Naive thymus-derived CD4-positive, alpha-beta T cell (primary cell): ENCODE measurements at regions of chr18 and their contacts with region 1.

Region 1: DNA sequence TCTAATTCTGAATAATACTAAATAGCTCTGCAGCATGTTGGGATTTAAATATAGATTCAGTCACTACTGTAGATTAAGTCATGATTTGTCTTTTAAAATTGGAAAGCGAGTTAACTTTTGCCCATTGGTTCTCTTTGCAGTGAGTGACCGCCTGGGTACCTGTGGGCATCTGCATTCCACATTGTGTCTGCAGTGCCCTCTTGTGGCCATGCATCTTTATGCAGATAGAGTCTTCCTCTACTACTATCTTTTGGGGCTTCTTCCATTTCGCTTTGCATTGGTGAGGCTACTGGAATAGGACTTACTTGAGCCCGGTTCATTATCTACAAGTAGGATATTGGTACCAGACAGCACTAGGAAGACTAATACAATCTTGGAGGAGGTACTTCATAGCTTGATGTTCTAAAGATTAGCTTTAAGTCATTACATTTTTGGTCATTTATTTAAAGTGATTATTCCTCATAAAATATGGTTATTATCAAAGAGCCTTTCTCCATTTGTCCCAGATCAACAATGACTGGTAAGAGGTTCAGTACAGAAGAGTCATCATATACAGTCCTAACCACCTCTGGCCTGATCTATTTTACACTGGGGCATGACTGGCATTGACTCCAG is 203.0 kb downstream of the SOCS6 start:
- DNase-seq: peak in 7 of 9 donors; percentile 9 to 43 (median 25)
- ATAC-seq: peak; percentile 68
- H3K4me3 ChIP-seq: no peak overlapping the region
- H3K4me3 Mint-ChIP-seq: no peak overlapping the region
- H3K27ac ChIP-seq: no peak overlapping the region
- H3K27ac Mint-ChIP-seq: peak overlapping the region in 4 of 9 donors; percentile 31 to 59 (median 44)
- H3K4me1 ChIP-seq: no peaks in the 10 kb centered on the region
- H3K4me1 Mint-ChIP-seq: peaks cover 0 to 14% (median 8%) of the 10 kb centered on the region in 7 donors
- H3K27me3 ChIP-seq: no peaks in the 10 kb centered on the region
- H3K27me3 Mint-ChIP-seq: peaks cover 0 to 10% (median 7%) of the 10 kb centered on the region in 5 donors

Region 2: DNA sequence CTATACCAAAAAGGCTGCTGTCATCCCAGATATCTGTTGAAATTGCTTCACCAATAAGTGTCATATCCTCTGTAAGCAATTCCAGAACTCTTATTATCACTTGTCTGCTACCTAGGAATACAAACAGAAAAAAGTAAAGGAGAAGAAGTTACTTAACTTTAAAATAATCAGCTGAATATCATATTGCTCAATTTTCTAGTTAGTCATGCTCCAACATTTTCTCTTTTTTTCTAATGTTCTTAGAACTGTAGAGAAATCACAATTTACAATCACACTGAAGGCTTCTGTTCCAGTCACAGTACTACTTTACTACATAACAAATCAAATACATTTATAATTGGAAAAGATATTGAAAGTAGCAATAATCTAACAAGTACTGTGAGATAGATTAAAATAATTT is 303.7 kb before region 1 on chr18:
- CTCF ChIA-PET with region 1: no interaction called
- POLR2A ChIA-PET with region 1: no interaction called
- intact Hi-C with region 1: no loop called
- DNase-seq: no peak
- ATAC-seq: no peak
- H3K4me3 ChIP-seq: no peak overlapping the region
- H3K4me3 Mint-ChIP-seq: no peak overlapping the region
- H3K27ac ChIP-seq: no peak overlapping the region
- H3K27ac Mint-ChIP-seq: no peak overlapping the region
- H3K4me1 ChIP-seq: no peaks in the 10 kb centered on the region
- H3K4me1 Mint-ChIP-seq: peaks cover 5 to 27% (median 19%) of the 10 kb centered on the region in 7 donors
- H3K27me3 ChIP-seq: no peaks in the 10 kb centered on the region
- H3K27me3 Mint-ChIP-seq: no peaks in the 10 kb centered on the region

Region 3: GRCh38 chr18:70598406-70598805 is 106.6 kb after region 1 on chr18:
- CTCF ChIA-PET with region 1: no interaction called
- POLR2A ChIA-PET with region 1: no interaction called
- intact Hi-C with region 1: loop called in 1 of 2 experiments (anchors 5 kb)
- DNase-seq: no peak
- ATAC-seq: no peak
- H3K4me3 ChIP-seq: no peak overlapping the region
- H3K4me3 Mint-ChIP-seq: no peak overlapping the region
- H3K27ac ChIP-seq: no peak overlapping the region
- H3K27ac Mint-ChIP-seq: peak overlapping the region in 6 of 9 donors; percentile 56 to 92 (median 84)
- H3K4me1 ChIP-seq: peaks cover 0 to 5% of the 10 kb centered on the region in 2 donors
- H3K4me1 Mint-ChIP-seq: peaks cover 0 to 33% (median 17%) of the 10 kb centered on the region in 7 donors
- H3K27me3 ChIP-seq: no peaks in the 10 kb centered on the region
- H3K27me3 Mint-ChIP-seq: no peaks in the 10 kb centered on the region

Region 4: GRCh38 chr18:70781860-70782453 is 290.1 kb after region 1 on chr18:
- CTCF ChIA-PET with region 1: interaction called, 4 read pairs
- POLR2A ChIA-PET with region 1: no interaction called
- intact Hi-C with region 1: loop called in 1 of 2 experiments (anchors 1 kb)
- DNase-seq: peak; percentile 21 to 76 (median 72)
- ATAC-seq: peak; percentile 96
- H3K4me3 ChIP-seq: no peak overlapping the region
- H3K4me3 Mint-ChIP-seq: peak overlapping the region in 5 of 10 donors; percentile 2 to 60 (median 10)
- H3K27ac ChIP-seq: no peak overlapping the region
- H3K27ac Mint-ChIP-seq: peak overlapping the region in 3 of 9 donors; percentile 22 to 80 (median 77)
- H3K4me1 ChIP-seq: peaks cover 0 to 6% of the 10 kb centered on the region in 2 donors
- H3K4me1 Mint-ChIP-seq: peaks cover 0 to 24% (median 23%) of the 10 kb centered on the region in 7 donors
- H3K27me3 ChIP-seq: no peaks in the 10 kb centered on the region
- H3K27me3 Mint-ChIP-seq: no peaks in the 10 kb centered on the region

Region 5: GRCh38 chr18:70931942-70932814 is 440.3 kb after region 1 on chr18:
- CTCF ChIA-PET with region 1: no interaction called
- POLR2A ChIA-PET with region 1: no interaction called
- intact Hi-C with region 1: loop called in 1 of 2 experiments (anchors 1 kb)
- DNase-seq: peak in 5 of 9 donors; percentile 4 to 32 (median 19)
- ATAC-seq: no peak
- H3K4me3 ChIP-seq: no peak overlapping the region
- H3K4me3 Mint-ChIP-seq: no peak overlapping the region
- H3K27ac ChIP-seq: no peak overlapping the region
- H3K27ac Mint-ChIP-seq: peak overlapping the region in 3 of 9 donors; percentile 4 to 59 (median 16)
- H3K4me1 ChIP-seq: peaks cover 0 to 6% of the 10 kb centered on the region in 2 donors
- H3K4me1 Mint-ChIP-seq: peaks cover 0 to 10% (median 8%) of the 10 kb centered on the region in 7 donors
- H3K27me3 ChIP-seq: no peaks in the 10 kb centered on the region
- H3K27me3 Mint-ChIP-seq: no peaks in the 10 kb centered on the region

Region 6: DNA sequence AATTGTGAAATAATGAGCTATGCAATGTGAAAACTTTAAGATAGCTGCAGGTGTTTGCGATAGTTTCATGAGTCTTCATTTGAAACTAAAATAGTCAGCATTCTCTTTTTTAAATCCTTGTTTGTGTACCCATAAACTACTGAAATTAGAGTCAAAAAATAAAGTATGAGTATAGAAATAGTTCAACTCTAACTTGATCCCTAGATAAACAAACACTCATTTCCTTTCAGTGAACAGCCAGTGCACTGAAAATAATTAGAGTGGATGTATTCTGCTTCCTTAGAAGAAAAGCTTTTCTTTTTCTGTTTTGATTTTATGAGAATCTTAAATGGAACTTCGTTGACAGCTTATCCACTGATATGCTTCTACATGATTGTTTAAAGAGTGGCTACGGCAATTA is 830.4 kb after region 1 on chr18:
- CTCF ChIA-PET with region 1: no interaction called
- POLR2A ChIA-PET with region 1: no interaction called
- intact Hi-C with region 1: loop called in 1 of 2 experiments (anchors 10 kb)
- DNase-seq: no peak
- ATAC-seq: no peak
- H3K4me3 ChIP-seq: no peak overlapping the region
- H3K4me3 Mint-ChIP-seq: no peak overlapping the region
- H3K27ac ChIP-seq: no peak overlapping the region
- H3K27ac Mint-ChIP-seq: no peak overlapping the region
- H3K4me1 ChIP-seq: no peaks in the 10 kb centered on the region
- H3K4me1 Mint-ChIP-seq: peaks cover 0 to 2% (median 0%) of the 10 kb centered on the region in 7 donors
- H3K27me3 ChIP-seq: no peaks in the 10 kb centered on the region
- H3K27me3 Mint-ChIP-seq: peaks cover 0 to 4% (median 0%) of the 10 kb centered on the region in 5 donors

Region 7: GRCh38 chr18:71784777-71785176 is 1292.9 kb after region 1 on chr18:
- CTCF ChIA-PET with region 1: interaction called, 11 read pairs
- POLR2A ChIA-PET with region 1: no interaction called
- intact Hi-C with region 1: no loop called
- DNase-seq: peak in 3 of 9 donors; percentile 0 to 5 (median 0)
- ATAC-seq: no peak
- H3K4me3 ChIP-seq: no peak overlapping the region
- H3K4me3 Mint-ChIP-seq: no peak overlapping the region
- H3K27ac ChIP-seq: no peak overlapping the region
- H3K27ac Mint-ChIP-seq: no peak overlapping the region
- H3K4me1 ChIP-seq: no peaks in the 10 kb centered on the region
- H3K4me1 Mint-ChIP-seq: no peaks in the 10 kb centered on the region
- H3K27me3 ChIP-seq: no peaks in the 10 kb centered on the region
- H3K27me3 Mint-ChIP-seq: no peaks in the 10 kb centered on the region